ENCODE measurements at regions of chr3 and their contacts with region 1.

Region 1: DNA sequence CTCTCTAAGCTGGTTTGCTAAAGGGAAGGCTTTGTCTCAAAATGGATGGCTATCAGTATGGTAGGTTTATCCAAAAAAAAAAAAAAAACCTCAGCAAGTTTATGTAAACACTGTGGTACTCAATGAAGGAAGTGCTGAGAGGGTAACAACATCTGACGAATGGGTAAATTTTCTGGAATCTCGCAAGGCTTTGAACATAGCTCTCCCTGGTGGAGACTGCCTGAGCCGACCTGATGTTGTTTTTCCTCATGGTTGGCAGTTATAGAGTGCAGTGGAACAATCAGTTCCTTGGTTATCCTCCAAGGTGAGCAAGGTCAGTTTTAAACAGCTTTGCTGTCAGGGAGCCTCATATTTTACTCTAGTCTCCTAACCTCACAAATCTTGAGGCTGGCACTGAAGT is 94.6 kb downstream of the ZPLD1 start:
- DNase-seq: peak in 1 of 3 donors; percentile 64
- ATAC-seq: peak; percentile 74 to 81
- H3K4me3 ChIP-seq: no peak overlapping the region
- H3K27ac ChIP-seq: no peak overlapping the region
- H3K4me1 ChIP-seq: no peaks in the 10 kb centered on the region
- H3K27me3 ChIP-seq: no peaks in the 10 kb centered on the region

Region 2: DNA sequence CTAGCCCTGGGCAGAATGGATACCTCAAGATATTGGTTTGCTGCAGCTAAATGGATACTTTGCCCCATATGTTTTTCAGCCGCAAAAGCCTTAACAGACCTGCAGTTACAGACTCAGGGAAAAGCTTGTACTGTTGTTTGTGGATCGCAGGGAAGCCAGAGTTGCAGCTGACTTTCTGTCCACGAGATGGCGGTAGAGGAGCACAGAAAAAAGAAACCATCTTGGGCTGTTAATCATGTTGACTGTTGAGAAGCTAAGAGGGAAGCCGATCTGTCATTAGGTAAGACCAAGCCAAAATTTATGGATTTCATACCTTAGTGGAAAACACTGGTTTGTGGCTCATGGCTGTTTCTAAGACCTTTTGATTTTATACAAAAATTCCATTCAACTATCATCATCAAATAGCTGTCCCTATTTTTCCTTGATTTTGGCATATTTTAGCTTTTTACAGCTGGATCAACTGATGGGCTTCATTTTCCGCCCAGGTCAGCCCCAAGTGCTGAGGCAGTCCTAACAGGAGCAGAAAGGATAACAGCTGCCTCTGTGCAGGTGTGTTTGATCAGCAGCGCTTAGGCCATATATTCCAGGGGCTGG is 300.3 kb before region 1 on chr3:
- intact Hi-C with region 1: loop called in 3 of 4 experiments (anchors 2 to 5 kb)
- DNase-seq: peak; percentile 50 to 83 (median 69)
- ATAC-seq: peak; percentile 64 to 80
- H3K4me3 ChIP-seq: no peak overlapping the region
- H3K27ac ChIP-seq: no peak overlapping the region
- H3K4me1 ChIP-seq: no peaks in the 10 kb centered on the region
- H3K27me3 ChIP-seq: no peaks in the 10 kb centered on the region

Region 3: GRCh38 chr3:102235679-102236078 is 293.8 kb before region 1 on chr3:
- intact Hi-C with region 1: loop called in 2 of 4 experiments (anchors 2 to 5 kb)
- DNase-seq: no peak
- ATAC-seq: no peak
- H3K4me3 ChIP-seq: no peak overlapping the region
- H3K27ac ChIP-seq: no peak overlapping the region
- H3K4me1 ChIP-seq: no peaks in the 10 kb centered on the region
- H3K27me3 ChIP-seq: no peaks in the 10 kb centered on the region

Region 4: DNA sequence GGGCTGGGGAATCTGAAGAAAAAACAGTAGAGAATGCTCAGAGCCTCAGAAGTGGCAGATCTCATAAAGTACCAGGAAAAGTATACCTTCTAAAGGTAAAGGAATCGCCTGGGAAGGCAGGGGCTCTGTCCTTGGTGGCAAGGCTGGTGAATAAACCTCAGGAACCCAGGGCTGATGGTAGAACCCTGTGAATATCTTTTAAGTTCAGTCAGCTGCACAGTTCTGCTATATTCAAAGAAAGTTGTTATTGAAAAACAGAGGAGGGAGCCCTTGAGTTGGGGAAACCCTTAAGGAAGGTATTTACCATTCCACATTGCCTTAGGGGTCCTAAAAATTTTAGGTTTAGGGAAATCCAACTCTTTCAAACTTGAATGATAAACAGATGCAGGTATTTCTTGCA is 63.5 kb before region 1 on chr3:
- intact Hi-C with region 1: loop called in 3 of 4 experiments (anchors 5 to 10 kb)
- DNase-seq: no peak
- ATAC-seq: no peak
- H3K4me3 ChIP-seq: no peak overlapping the region
- H3K27ac ChIP-seq: no peak overlapping the region
- H3K4me1 ChIP-seq: no peaks in the 10 kb centered on the region
- H3K27me3 ChIP-seq: no peaks in the 10 kb centered on the region

Region 5: GRCh38 chr3:102790747-102791325 is 261.4 kb after region 1 on chr3:
- intact Hi-C with region 1: no loop called
- DNase-seq: no peak
- ATAC-seq: no peak
- H3K4me3 ChIP-seq: no peak overlapping the region
- H3K27ac ChIP-seq: no peak overlapping the region
- H3K4me1 ChIP-seq: no peaks in the 10 kb centered on the region
- H3K27me3 ChIP-seq: no peaks in the 10 kb centered on the region

Measured in right cardiac atrium (tissue), 5 donors.